ENCODE measurements at regions of chr5 and their contacts with region 1.

Region 1: GRCh38 chr5:157820593-157821252 is 38.2 kb downstream of the CLINT1 start:
- DNase-seq: no peak
- H3K4me3 ChIP-seq: no peak overlapping the region
- H3K27ac ChIP-seq: peak overlapping the region; percentile 17 to 61 (median 44)
- H3K4me1 ChIP-seq: peaks cover 8 to 53% (median 22%) of the 10 kb centered on the region in 4 donors
- H3K27me3 ChIP-seq: no peaks in the 10 kb centered on the region
- CTCF ChIP-seq: peak; percentile 46 to 63 (median 52)
- EP300 ChIP-seq: no peak
- POLR2A ChIP-seq: no peak

Region 2: GRCh38 chr5:157948738-157949410 is 128.2 kb after region 1 on chr5:
- in situ Hi-C with region 1: loop called in 2 of 4 experiments (anchors 10 to 25 kb)
- intact Hi-C with region 1: no loop called
- DNase-seq: peak; percentile 94
- H3K4me3 ChIP-seq: no peak overlapping the region
- H3K27ac ChIP-seq: peak overlapping the region; percentile 46 to 76 (median 68)
- H3K4me1 ChIP-seq: peaks cover 0 to 8% (median 4%) of the 10 kb centered on the region in 4 donors
- H3K27me3 ChIP-seq: no peaks in the 10 kb centered on the region
- CTCF ChIP-seq: peak; percentile 78 to 91 (median 84)
- EP300 ChIP-seq: peak; percentile 52
- POLR2A ChIP-seq: no peak

Region 3: DNA sequence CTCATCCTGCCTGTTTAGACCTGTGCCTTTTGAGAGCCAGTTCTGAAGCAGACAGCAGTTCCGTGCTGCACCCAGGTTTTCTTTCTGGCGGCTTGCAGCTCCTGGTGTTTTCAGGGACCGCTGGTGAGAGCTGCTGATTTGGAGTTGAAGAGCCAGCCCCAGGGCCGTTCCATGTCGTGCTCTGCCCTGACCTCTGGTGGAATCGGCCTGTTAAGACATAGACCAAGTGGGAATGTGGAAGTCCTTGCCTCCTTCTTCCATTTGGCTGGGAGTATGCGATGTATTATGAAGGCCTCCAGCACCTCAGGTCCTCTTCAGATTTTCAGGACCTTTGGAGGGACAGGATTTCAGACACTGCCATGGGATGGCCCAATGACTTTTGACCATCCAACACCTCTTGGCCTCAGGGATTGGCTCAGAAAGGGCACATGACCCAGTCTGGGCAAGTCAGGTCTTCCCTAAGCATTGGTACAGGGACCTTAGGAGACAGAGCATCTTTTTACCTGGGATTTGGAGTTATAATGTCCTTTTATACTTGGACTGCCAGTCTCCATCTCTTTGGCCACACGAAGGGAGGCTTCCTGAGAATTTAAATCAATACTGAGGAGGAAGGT is 174.3 kb after region 1 on chr5:
- in situ Hi-C with region 1: no loop called
- intact Hi-C with region 1: loop called (anchors 5 kb)
- DNase-seq: peak; percentile 77
- H3K4me3 ChIP-seq: no peak overlapping the region
- H3K27ac ChIP-seq: no peak overlapping the region
- H3K4me1 ChIP-seq: peaks cover 0 to 6% (median 5%) of the 10 kb centered on the region in 4 donors
- H3K27me3 ChIP-seq: no peaks in the 10 kb centered on the region
- CTCF ChIP-seq: peak; percentile 70 to 74 (median 72)
- EP300 ChIP-seq: no peak
- POLR2A ChIP-seq: no peak

Measured in transverse colon (tissue), 4 donors.